B cell (primary cell): ENCODE measurements at regions of chr20 and their contacts with region 1.

Region 1: GRCh38 chr20:18507218-18508021 is at the start of gene SEC23B:
- DNase-seq: peak; percentile 100
- ATAC-seq: peak; percentile 89
- H3K4me3 ChIP-seq: peak within 1 kb of the TSS; percentile 57 to 88 (median 80)
- H3K4me3 Mint-ChIP-seq: peak within 1 kb of the TSS; percentile 99
- H3K27ac ChIP-seq: peak within 1 kb of the TSS; percentile 98
- H3K27ac Mint-ChIP-seq: peak within 1 kb of the TSS; percentile 98
- H3K4me1 ChIP-seq: peaks cover 13 to 17% of the 10 kb centered on the region in 2 donors
- H3K4me1 Mint-ChIP-seq: peaks cover 22% of the 10 kb centered on the region
- H3K27me3 ChIP-seq: no peaks in the 10 kb centered on the region
- H3K27me3 Mint-ChIP-seq: peaks cover 6% of the 10 kb centered on the region
- CTCF ChIP-seq: no peak
- total RNA-seq, gene SEC23B: 39.4 and 48.1 TPM in 2 replicates

Region 2: DNA sequence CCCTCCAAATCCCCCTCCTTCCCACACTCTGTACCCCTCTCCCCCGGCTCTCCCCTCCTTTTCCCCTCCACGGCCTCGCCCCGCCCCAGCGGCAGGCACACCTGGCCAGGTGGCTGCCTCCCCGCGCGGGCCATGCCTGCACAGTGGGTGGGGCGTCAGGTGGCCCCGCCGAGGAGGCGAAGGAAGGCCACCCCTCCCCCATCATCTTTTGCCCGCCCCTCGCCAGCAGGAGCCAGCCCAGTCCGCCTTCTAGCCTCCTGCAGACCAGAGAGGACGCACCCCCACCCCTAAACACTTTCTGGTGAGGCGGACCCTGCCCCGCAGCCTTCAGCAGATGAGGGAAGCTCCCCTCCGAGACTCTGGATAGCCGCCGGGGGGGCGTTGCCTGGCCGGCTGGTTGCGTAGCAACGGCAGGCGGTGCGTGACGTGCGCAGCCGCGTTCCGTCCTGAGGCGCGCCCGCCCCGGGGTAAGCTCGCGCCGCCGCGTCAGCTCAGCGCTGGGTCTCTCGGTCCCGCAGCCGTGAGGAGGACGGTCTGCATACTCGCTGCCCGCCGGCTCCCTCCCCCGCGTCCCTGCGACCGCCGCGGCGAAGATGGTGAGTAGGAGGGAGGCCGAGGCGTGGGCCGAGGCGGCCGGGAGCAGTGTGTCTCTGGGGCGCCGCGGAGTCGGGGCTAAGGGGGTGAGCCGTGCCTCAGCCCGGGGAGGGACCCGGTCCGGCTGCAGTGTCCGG is 937.6 kb before region 1 on chr20 and contains the start of gene DSTN:
- CTCF ChIA-PET with region 1: no interaction called
- POLR2A ChIA-PET with region 1: no interaction called
- intact Hi-C with region 1: loop called (anchors 2 kb)
- DNase-seq: peak; percentile 93
- ATAC-seq: peak; percentile 91
- H3K4me3 ChIP-seq: peak within 1 kb of the TSS; percentile 77 to 97 (median 83)
- H3K4me3 Mint-ChIP-seq: peak within 1 kb of the TSS; percentile 94
- H3K27ac ChIP-seq: peak within 1 kb of the TSS in 1 of 2 donors; percentile 72
- H3K27ac Mint-ChIP-seq: peak within 1 kb of the TSS; percentile 89
- H3K4me1 ChIP-seq: peaks cover 11 to 14% of the 10 kb centered on the region in 2 donors
- H3K4me1 Mint-ChIP-seq: peaks cover 20% of the 10 kb centered on the region
- H3K27me3 ChIP-seq: peaks cover 0 to 12% (median 2%) of the 10 kb centered on the region in 4 experiments
- H3K27me3 Mint-ChIP-seq: peaks cover 8% of the 10 kb centered on the region
- CTCF ChIP-seq: no peak
- total RNA-seq, gene DSTN: 12.9 and 13.4 TPM in 2 replicates

Region 3: GRCh38 chr20:18287915-18288748 is 219.3 kb before region 1 on chr20 and contains the start of gene ZNF133:
- CTCF ChIA-PET with region 1: no interaction called
- POLR2A ChIA-PET with region 1: interaction called, 8 read pairs
- intact Hi-C with region 1: loop called (anchors 2 kb)
- DNase-seq: peak; percentile 98
- ATAC-seq: peak; percentile 94
- H3K4me3 ChIP-seq: peak within 1 kb of the TSS; percentile 88 to 99 (median 96)
- H3K4me3 Mint-ChIP-seq: peak within 1 kb of the TSS; percentile 90
- H3K27ac ChIP-seq: peak within 1 kb of the TSS; percentile 89 to 97
- H3K27ac Mint-ChIP-seq: peak within 1 kb of the TSS; percentile 96
- H3K4me1 ChIP-seq: peaks cover 12 to 15% of the 10 kb centered on the region in 2 donors
- H3K4me1 Mint-ChIP-seq: peaks cover 23% of the 10 kb centered on the region
- H3K27me3 ChIP-seq: peaks cover 0 to 19% (median 7%) of the 10 kb centered on the region in 4 experiments
- H3K27me3 Mint-ChIP-seq: peaks cover 28% of the 10 kb centered on the region
- CTCF ChIP-seq: no peak
- total RNA-seq, gene ZNF133: 13.6 and 14.9 TPM in 2 replicates

Region 4: GRCh38 chr20:18466894-18467730 is 40.3 kb before region 1 on chr20 and contains the starts of genes DZANK1 and POLR3F:
- CTCF ChIA-PET with region 1: interaction called, 20 read pairs
- POLR2A ChIA-PET with region 1: interaction called, 26 read pairs
- intact Hi-C with region 1: loop called (anchors 1 kb)
- DNase-seq: peak; percentile 94
- ATAC-seq: peak; percentile 95
- H3K4me3 ChIP-seq: peak within 1 kb of the TSS; percentile 54 to 97 (median 85)
- H3K4me3 Mint-ChIP-seq: peak within 1 kb of the TSS; percentile 97
- H3K27ac ChIP-seq: peak within 1 kb of the TSS; percentile 39 to 81
- H3K27ac Mint-ChIP-seq: peak within 1 kb of the TSS; percentile 97
- H3K4me1 ChIP-seq: peaks cover 12 to 15% of the 10 kb centered on the region in 2 donors
- H3K4me1 Mint-ChIP-seq: peaks cover 25% of the 10 kb centered on the region
- H3K27me3 ChIP-seq: no peaks in the 10 kb centered on the region
- H3K27me3 Mint-ChIP-seq: no peaks in the 10 kb centered on the region
- CTCF ChIP-seq: no peak
- total RNA-seq, gene DZANK1: 5.6 TPM in 2 replicates
- total RNA-seq, gene POLR3F: 13.1 and 13.7 TPM in 2 replicates

Region 5: DNA sequence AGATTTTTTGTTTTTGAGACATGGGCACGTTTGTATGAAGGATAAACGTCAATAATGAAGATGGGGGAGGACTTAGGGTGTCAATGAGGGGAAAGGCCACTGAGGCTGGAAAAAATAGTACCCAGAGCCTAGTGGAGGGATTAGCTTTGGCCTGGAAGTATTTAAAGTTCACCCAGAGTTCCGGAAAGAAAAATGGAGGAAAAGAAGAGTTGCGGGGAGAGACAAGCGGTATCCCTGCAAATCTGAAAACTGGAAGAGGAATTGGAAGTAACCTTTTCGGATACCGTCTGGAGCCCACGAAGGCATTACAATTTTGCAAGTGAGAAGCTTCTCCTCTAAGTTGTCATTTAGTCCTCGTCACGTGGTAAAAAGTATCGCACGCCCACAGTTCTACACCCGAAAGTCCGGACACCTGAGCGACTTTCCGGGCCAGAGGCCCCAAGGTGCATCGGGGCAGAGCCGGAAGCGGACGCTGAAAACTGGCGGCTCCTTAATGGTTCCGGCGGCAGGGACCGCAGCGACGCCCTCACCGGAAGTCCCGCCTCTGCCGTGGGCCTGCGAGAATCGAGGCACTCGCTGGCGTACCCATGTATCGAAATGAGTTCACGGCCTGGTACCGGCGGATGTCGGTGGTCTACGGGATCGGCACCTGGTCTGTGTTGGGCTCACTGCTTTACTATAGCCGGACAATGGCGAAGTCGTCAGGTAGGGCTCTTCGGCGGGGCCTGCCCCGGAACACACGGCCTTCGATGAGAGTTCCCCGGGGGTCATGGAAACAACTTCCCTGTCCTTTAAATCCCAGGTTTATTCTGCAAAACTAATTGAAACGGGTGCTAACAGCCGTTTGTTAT is 59.7 kb after region 1 on chr20 and contains the start of gene SMIM26:
- CTCF ChIA-PET with region 1: no interaction called
- POLR2A ChIA-PET with region 1: interaction called, 6 read pairs
- intact Hi-C with region 1: loop called (anchors 1 kb)
- DNase-seq: peak; percentile 95
- ATAC-seq: peak; percentile 98
- H3K4me3 ChIP-seq: peak within 1 kb of the TSS; percentile 67 to 88 (median 80)
- H3K4me3 Mint-ChIP-seq: peak within 1 kb of the TSS; percentile 99
- H3K27ac ChIP-seq: peak within 1 kb of the TSS; percentile 84 to 91
- H3K27ac Mint-ChIP-seq: peak within 1 kb of the TSS; percentile 97
- H3K4me1 ChIP-seq: peaks cover 12 to 13% of the 10 kb centered on the region in 2 donors
- H3K4me1 Mint-ChIP-seq: peaks cover 18% of the 10 kb centered on the region
- H3K27me3 ChIP-seq: no peaks in the 10 kb centered on the region
- H3K27me3 Mint-ChIP-seq: no peaks in the 10 kb centered on the region
- CTCF ChIP-seq: no peak
- total RNA-seq, gene SMIM26: 47.4 and 47.7 TPM in 2 replicates

Region 6: GRCh38 chr20:20017001-20017843 is 1509.8 kb after region 1 on chr20 and contains the start of gene NAA20:
- CTCF ChIA-PET with region 1: no interaction called
- POLR2A ChIA-PET with region 1: no interaction called
- intact Hi-C with region 1: loop called (anchors 5 kb)
- DNase-seq: peak; percentile 91
- ATAC-seq: peak; percentile 98
- H3K4me3 ChIP-seq: peak within 1 kb of the TSS; percentile 41 to 91 (median 83)
- H3K4me3 Mint-ChIP-seq: peak within 1 kb of the TSS; percentile 94
- H3K27ac ChIP-seq: peak within 1 kb of the TSS; percentile 1 to 86
- H3K27ac Mint-ChIP-seq: peak within 1 kb of the TSS; percentile 94
- H3K4me1 ChIP-seq: peaks cover 12 to 27% of the 10 kb centered on the region in 2 donors
- H3K4me1 Mint-ChIP-seq: peaks cover 42% of the 10 kb centered on the region
- H3K27me3 ChIP-seq: no peaks in the 10 kb centered on the region
- H3K27me3 Mint-ChIP-seq: no peaks in the 10 kb centered on the region
- CTCF ChIP-seq: peak; percentile 73
- total RNA-seq, gene NAA20: 25.5 and 27.1 TPM in 2 replicates